Activated naive CD4-positive, alpha-beta T cell treated with anti-CD3 and anti-CD28 coated beads, Interleukin-2, amount 10 ng/mL, durations not matched to agents 7 days and 5 days (primary cell): ENCODE measurements at regions of chr11 and their contacts with region 1.

Region 1: GRCh38 chr11:62427630-62428233 is 8.9 kb downstream of the SCGB1A1 start:
- DNase-seq: no peak
- H3K4me3 Mint-ChIP-seq: no peak overlapping the region
- H3K27ac Mint-ChIP-seq: peak overlapping the region; percentile 86
- H3K4me1 Mint-ChIP-seq: peaks cover 61% of the 10 kb centered on the region
- H3K27me3 Mint-ChIP-seq: peaks cover 27% of the 10 kb centered on the region

Region 2: GRCh38 chr11:62123669-62124185 is 304.0 kb before region 1 on chr11 and contains the start of gene INCENP:
- CTCF ChIA-PET with region 1: no interaction called
- DNase-seq: peak; percentile 97
- H3K4me3 Mint-ChIP-seq: peak within 1 kb of the TSS; percentile 82
- H3K27ac Mint-ChIP-seq: peak within 1 kb of the TSS; percentile 89
- H3K4me1 Mint-ChIP-seq: peaks cover 41% of the 10 kb centered on the region
- H3K27me3 Mint-ChIP-seq: peaks cover 13% of the 10 kb centered on the region

Region 3: DNA sequence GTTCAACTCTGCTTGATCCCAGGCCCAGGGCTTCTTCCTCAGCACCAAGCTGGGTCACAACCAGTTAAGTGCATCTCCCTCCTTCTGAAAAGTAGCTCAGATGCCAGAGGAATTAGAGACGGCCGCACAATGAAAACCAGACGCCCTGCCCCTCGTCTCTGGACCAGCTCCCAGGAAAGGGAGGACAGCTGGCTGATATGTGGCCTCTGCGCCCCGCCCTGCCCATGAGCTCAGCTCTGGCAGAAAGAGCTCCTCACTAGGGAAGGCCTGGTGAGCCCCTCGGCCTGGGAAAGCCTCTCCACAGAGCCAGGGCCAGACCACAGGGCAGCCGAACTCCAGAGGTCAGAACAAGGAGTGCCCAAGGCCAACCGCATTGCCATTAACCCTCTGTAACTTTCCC is 27.0 kb before region 1 on chr11:
- CTCF ChIA-PET with region 1: interaction called, 61 read pairs
- DNase-seq: no peak
- H3K4me3 Mint-ChIP-seq: no peak overlapping the region
- H3K27ac Mint-ChIP-seq: no peak overlapping the region
- H3K4me1 Mint-ChIP-seq: peaks cover 56% of the 10 kb centered on the region
- H3K27me3 Mint-ChIP-seq: peaks cover 8% of the 10 kb centered on the region

Region 4: GRCh38 chr11:62536301-62536957 is 108.7 kb after region 1 on chr11:
- CTCF ChIA-PET with region 1: interaction called, 161 read pairs
- DNase-seq: no peak
- H3K4me3 Mint-ChIP-seq: no peak overlapping the region
- H3K27ac Mint-ChIP-seq: peak overlapping the region; percentile 43
- H3K4me1 Mint-ChIP-seq: peaks cover 30% of the 10 kb centered on the region
- H3K27me3 Mint-ChIP-seq: no peaks in the 10 kb centered on the region

Region 5: DNA sequence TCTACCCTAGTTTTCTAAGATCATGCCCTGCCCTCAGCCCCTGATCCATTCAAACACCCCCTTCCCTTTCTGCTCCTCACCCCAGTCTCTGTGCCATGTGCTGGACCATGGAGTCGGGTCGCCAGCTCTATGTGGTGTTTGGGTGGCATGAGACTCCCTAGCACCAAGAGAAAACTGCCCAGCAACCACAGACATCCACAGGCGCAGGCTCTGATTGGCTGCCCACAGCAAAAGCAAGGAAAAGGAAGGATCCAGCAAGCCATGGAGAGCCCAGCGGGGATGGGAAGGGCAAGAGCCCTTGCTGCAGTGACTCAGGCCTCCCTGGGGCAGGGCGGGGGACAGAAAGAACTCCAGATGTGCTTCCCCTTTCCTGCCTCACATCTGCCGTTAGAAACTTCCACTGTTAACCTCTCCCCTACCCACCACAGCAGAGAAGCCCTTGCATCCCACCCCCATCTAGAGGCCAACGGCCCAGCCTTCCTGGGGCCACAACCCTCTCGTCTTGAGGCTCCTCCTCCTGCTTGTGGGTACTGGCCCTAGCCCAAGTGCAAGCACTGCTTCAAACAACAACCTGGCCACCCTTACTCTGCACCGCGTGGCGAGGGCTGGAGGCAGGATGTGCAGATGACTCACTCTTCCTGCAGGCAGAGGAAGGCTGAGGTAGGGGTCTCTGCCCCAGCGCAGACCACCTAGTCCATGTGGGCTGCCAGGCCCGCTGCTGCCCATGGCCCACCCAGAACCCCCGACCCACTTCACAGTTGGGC is 128.6 kb after region 1 on chr11:
- CTCF ChIA-PET with region 1: interaction called, 147 read pairs
- DNase-seq: peak; percentile 93
- H3K4me3 Mint-ChIP-seq: peak overlapping the region; percentile 59
- H3K27ac Mint-ChIP-seq: peak overlapping the region; percentile 97
- H3K4me1 Mint-ChIP-seq: peaks cover 95% of the 10 kb centered on the region
- H3K27me3 Mint-ChIP-seq: no peaks in the 10 kb centered on the region

Region 6: DNA sequence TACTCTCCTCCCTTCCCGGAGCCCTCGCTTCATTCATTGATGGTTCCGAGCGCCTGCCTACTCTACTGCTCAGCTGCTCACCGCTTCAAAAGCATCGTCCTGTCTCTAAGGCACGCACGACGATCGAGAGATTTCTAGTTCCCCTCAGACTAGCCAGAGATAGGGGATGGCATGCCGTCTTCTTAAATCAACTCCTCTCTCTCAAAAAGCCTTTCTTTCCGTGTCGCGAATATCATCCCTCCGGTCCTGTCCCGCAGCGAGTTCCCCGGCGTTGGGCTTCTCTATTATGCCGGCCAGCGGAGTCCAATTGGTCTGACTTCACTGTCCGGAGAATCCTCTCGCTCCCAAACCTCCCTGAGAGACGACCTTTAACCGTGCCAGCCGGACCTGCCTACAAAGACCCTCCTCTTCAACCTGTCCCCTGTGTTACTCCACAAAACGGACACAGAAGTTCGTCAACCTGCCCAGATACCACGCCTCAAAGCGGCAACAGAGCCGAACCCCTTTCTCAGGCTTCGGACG is 145.4 kb after region 1 on chr11:
- CTCF ChIA-PET with region 1: interaction called, 12 read pairs
- DNase-seq: peak; percentile 44
- H3K4me3 Mint-ChIP-seq: peak overlapping the region; percentile 86
- H3K27ac Mint-ChIP-seq: peak overlapping the region; percentile 84
- H3K4me1 Mint-ChIP-seq: peaks cover 58% of the 10 kb centered on the region
- H3K27me3 Mint-ChIP-seq: no peaks in the 10 kb centered on the region